ENCODE measurements at regions of chr12 and their contacts with region 1.

Region 1: GRCh38 chr12:63103494-63104131 is 47.4 kb downstream of the AVPR1A start:
- DNase-seq: peak; percentile 46
- H3K4me3 ChIP-seq: no peak overlapping the region
- H3K27ac ChIP-seq: no peak overlapping the region
- H3K4me1 ChIP-seq: no peaks in the 10 kb centered on the region
- H3K27me3 ChIP-seq: no peaks in the 10 kb centered on the region
- CTCF ChIP-seq: peak; percentile 87

Region 2: DNA sequence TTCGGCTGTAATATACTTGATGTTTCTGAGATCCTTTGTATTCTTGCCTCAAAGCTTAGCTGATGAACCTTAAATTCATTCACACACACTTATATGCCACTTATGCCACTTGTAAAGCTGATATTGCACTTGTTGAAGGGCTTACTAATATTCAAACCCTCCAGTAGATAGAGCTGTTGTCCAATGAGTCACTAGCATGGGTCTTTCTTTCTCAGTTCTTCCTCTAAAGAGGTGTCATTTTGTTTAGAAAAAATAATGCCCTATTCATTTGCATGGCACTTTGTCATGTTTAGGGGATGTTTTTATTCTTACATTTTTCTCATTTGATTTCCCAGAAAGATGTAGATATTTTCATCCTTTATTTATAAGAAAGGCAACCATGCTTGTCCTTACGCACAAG is 580.6 kb before region 1 on chr12:
- CTCF ChIA-PET with region 1: no interaction called
- POLR2A ChIA-PET with region 1: no interaction called
- intact Hi-C with region 1: no loop called
- DNase-seq: peak; percentile 12
- H3K4me3 ChIP-seq: no peak overlapping the region
- H3K27ac ChIP-seq: no peak overlapping the region
- H3K4me1 ChIP-seq: peaks cover 7% of the 10 kb centered on the region
- H3K27me3 ChIP-seq: no peaks in the 10 kb centered on the region
- CTCF ChIP-seq: peak; percentile 28; the same call in 1 of the 2 replicates

Region 3: DNA sequence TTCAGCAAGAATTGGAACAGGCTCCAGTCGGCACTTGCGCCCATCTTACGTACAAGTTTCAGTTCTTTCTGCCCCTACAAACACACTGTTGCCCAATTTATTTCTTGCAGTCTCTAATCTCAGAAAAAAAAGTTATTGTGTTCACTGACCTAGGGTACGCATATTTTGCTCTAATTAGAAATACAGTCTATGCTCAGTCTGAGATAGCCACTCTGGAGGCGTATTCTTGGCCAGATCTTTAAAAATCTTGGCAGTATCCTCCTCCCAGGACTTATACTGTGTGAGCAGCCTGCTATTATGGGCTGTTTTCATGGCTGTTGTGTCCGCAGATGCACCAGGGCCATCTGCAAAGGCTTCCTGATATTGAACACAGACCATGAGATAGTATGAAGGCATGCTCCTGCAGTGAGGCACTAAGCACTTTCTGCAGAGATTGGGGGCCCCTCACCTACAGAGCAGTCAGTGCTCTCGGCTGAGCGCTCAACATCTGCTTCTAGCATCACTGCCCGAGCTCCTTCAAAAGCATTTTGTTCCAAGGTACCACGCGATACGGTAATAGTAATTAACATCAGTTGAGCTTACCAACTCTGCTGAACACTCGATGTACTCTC is 226.6 kb before region 1 on chr12:
- CTCF ChIA-PET with region 1: no interaction called
- POLR2A ChIA-PET with region 1: no interaction called
- intact Hi-C with region 1: no loop called
- DNase-seq: no peak
- H3K4me3 ChIP-seq: no peak overlapping the region
- H3K27ac ChIP-seq: no peak overlapping the region
- H3K4me1 ChIP-seq: no peaks in the 10 kb centered on the region
- H3K27me3 ChIP-seq: no peaks in the 10 kb centered on the region
- CTCF ChIP-seq: no peak

Region 4: GRCh38 chr12:63151623-63152320 is 48.2 kb after region 1 on chr12:
- CTCF ChIA-PET with region 1: no interaction called
- POLR2A ChIA-PET with region 1: no interaction called
- intact Hi-C with region 1: no loop called
- DNase-seq: peak; percentile 83
- H3K4me3 ChIP-seq: peak overlapping the region; percentile 40
- H3K27ac ChIP-seq: no peak overlapping the region
- H3K4me1 ChIP-seq: no peaks in the 10 kb centered on the region
- H3K27me3 ChIP-seq: peaks cover 45% of the 10 kb centered on the region
- CTCF ChIP-seq: peak; percentile 90

Region 5: GRCh38 chr12:63276537-63277365 is 173.1 kb after region 1 on chr12:
- CTCF ChIA-PET with region 1: no interaction called
- POLR2A ChIA-PET with region 1: no interaction called
- intact Hi-C with region 1: loop called (anchors 1 kb)
- DNase-seq: peak; percentile 67
- H3K4me3 ChIP-seq: no peak overlapping the region
- H3K27ac ChIP-seq: no peak overlapping the region
- H3K4me1 ChIP-seq: no peaks in the 10 kb centered on the region
- H3K27me3 ChIP-seq: no peaks in the 10 kb centered on the region
- CTCF ChIP-seq: peak; percentile 93

Region 6: DNA sequence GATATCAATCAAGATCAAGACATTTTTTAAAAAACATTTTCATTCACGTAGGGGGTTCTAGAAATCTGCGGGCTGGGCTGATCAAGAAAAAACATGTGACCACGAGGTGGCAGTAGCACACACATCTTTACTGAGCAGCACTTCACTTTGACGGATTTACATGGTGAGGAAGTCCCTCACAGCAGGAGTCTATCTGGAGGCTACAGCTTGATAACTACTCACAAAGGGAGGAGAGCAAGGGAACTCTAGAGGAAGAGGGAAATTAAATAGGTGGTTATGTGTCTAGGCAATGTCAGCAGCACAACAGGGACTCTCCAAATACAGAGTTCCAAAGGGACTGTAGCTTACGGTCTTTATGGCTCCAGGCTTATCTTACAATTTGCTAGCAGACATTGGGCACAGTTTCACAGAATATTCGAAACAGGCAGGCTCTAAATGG is 316.6 kb after region 1 on chr12:
- CTCF ChIA-PET with region 1: no interaction called
- POLR2A ChIA-PET with region 1: no interaction called
- intact Hi-C with region 1: loop called (anchors 5 kb)
- DNase-seq: peak; percentile 99
- H3K4me3 ChIP-seq: no peak overlapping the region
- H3K27ac ChIP-seq: peak overlapping the region; percentile 22
- H3K4me1 ChIP-seq: peaks cover 9% of the 10 kb centered on the region
- H3K27me3 ChIP-seq: no peaks in the 10 kb centered on the region
- CTCF ChIP-seq: peak; percentile 90

Region 7: GRCh38 chr12:63525831-63526230 is 422.2 kb after region 1 on chr12:
- CTCF ChIA-PET with region 1: no interaction called
- POLR2A ChIA-PET with region 1: no interaction called
- intact Hi-C with region 1: no loop called
- DNase-seq: no peak
- H3K4me3 ChIP-seq: no peak overlapping the region
- H3K27ac ChIP-seq: no peak overlapping the region
- H3K4me1 ChIP-seq: no peaks in the 10 kb centered on the region
- H3K27me3 ChIP-seq: no peaks in the 10 kb centered on the region
- CTCF ChIP-seq: no peak

Region 8: GRCh38 chr12:63668028-63668799 is 564.6 kb after region 1 on chr12 and contains the start of gene DPY19L2:
- CTCF ChIA-PET with region 1: no interaction called
- POLR2A ChIA-PET with region 1: no interaction called
- intact Hi-C with region 1: loop called (anchors 5 kb)
- DNase-seq: peak; percentile 71
- H3K4me3 ChIP-seq: peak within 1 kb of the TSS; percentile 57
- H3K27ac ChIP-seq: no peak within 1 kb of the TSS
- H3K4me1 ChIP-seq: no peaks in the 10 kb centered on the region
- H3K27me3 ChIP-seq: peaks cover 17% of the 10 kb centered on the region
- CTCF ChIP-seq: no peak
- total RNA-seq, gene DPY19L2: 4.2 and 7.5 TPM in 2 replicates

Region 9: DNA sequence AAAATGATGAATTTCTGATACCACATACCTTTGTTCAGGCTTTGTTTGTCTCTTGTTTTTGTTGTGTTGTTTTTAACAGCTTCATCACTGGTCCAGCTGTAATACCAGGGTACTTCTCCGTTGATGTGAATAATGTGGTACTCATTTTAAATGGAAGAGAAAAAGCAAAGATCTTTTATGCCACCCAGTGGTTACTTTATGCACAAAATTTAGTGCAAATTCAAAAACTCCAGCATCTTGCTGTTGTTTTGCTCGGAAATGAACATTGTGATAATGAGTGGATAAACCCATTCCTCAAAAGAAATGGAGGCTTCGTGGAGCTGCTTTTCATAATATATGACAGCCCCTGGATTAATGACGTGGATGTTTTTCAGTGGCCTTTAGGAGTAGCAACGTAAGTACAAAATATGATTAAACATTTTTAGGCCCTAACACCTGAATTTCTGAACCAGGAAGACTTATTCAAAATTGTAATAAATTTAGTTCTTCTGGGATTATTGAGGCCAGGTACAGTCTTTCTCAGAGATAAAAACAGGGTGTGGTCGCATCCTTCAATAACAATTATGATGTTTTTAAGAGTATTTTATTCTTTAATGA is 698.5 kb after region 1 on chr12:
- CTCF ChIA-PET with region 1: no interaction called
- POLR2A ChIA-PET with region 1: no interaction called
- intact Hi-C with region 1: loop called (anchors 2 kb)
- DNase-seq: peak; percentile 55
- H3K4me3 ChIP-seq: no peak overlapping the region
- H3K27ac ChIP-seq: no peak overlapping the region
- H3K4me1 ChIP-seq: no peaks in the 10 kb centered on the region
- H3K27me3 ChIP-seq: no peaks in the 10 kb centered on the region
- CTCF ChIP-seq: peak; percentile 65

Region 10: DNA sequence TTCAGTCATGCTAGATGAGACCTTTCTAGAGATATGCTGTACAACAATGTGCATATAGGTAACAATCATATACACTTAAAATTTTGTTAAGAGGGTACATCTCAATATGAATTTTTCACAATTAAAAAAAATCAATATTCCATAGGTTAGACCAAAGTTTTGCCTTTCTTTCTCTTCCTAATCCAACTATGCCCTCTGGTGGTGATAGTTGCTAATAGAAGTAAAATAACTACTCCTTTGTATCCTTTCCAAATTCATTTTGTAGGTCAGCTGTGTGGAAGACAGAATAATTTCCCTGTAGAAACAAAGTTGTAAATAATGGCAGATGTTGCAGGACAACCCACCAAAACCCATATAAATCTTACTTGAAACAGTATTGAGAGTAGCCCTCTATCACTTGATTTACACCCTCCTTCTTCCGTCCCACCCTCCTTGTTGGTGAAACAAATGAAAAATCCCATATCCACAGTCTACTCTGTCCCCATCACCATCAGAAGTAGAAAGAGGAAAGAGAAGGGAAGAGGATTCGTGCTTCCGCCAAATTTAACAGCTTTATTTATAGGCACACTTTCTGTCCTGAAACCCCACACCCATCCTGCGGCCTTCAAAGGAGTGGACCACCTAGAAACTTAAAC is 1152.7 kb after region 1 on chr12:
- CTCF ChIA-PET with region 1: no interaction called
- POLR2A ChIA-PET with region 1: no interaction called
- intact Hi-C with region 1: loop called (anchors 10 kb)
- DNase-seq: peak; percentile 79
- H3K4me3 ChIP-seq: no peak overlapping the region
- H3K27ac ChIP-seq: no peak overlapping the region
- H3K4me1 ChIP-seq: no peaks in the 10 kb centered on the region
- H3K27me3 ChIP-seq: no peaks in the 10 kb centered on the region
- CTCF ChIP-seq: peak; percentile 71

Measured in A673 (cell line).